B cell (primary cell): ENCODE measurements at regions of chr11 and their contacts with region 1.

Region 1: GRCh38 chr11:48109046-48109666 is 107.5 kb upstream of the OR4B1 start:
- DNase-seq: no peak
- ATAC-seq: peak; percentile 12
- H3K4me3 ChIP-seq: peak overlapping the region; percentile 5 to 68 (median 39)
- H3K4me3 Mint-ChIP-seq: peak overlapping the region; percentile 74
- H3K27ac ChIP-seq: peak overlapping the region; percentile 54 to 80
- H3K27ac Mint-ChIP-seq: peak overlapping the region; percentile 70
- H3K4me1 ChIP-seq: peaks cover 69 to 78% of the 10 kb centered on the region in 2 donors
- H3K4me1 Mint-ChIP-seq: peaks cover 70% of the 10 kb centered on the region
- H3K27me3 ChIP-seq: no peaks in the 10 kb centered on the region
- H3K27me3 Mint-ChIP-seq: no peaks in the 10 kb centered on the region
- CTCF ChIP-seq: no peak

Region 2: GRCh38 chr11:47847892-47848635 is 261.1 kb before region 1 on chr11 and contains the start of gene NUP160:
- CTCF ChIA-PET with region 1: interaction called, 89 read pairs
- POLR2A ChIA-PET with region 1: interaction called, 3 read pairs
- intact Hi-C with region 1: loop called (anchors 1 kb)
- DNase-seq: peak; percentile 92
- ATAC-seq: peak; percentile 77
- H3K4me3 ChIP-seq: peak within 1 kb of the TSS; percentile 93 to 99 (median 98)
- H3K4me3 Mint-ChIP-seq: peak within 1 kb of the TSS; percentile 99
- H3K27ac ChIP-seq: peak within 1 kb of the TSS; percentile 94 to 95
- H3K27ac Mint-ChIP-seq: peak within 1 kb of the TSS; percentile 98
- H3K4me1 ChIP-seq: peaks cover 62 to 66% of the 10 kb centered on the region in 2 donors
- H3K4me1 Mint-ChIP-seq: peaks cover 57% of the 10 kb centered on the region
- H3K27me3 ChIP-seq: no peaks in the 10 kb centered on the region
- H3K27me3 Mint-ChIP-seq: no peaks in the 10 kb centered on the region
- CTCF ChIP-seq: no peak
- total RNA-seq, gene NUP160: 74.3 and 77.3 TPM in 2 replicates

Region 3: GRCh38 chr11:47899801-47900200 is 209.4 kb before region 1 on chr11:
- CTCF ChIA-PET with region 1: no interaction called
- POLR2A ChIA-PET with region 1: interaction called, 5 read pairs
- intact Hi-C with region 1: loop called (anchors 1 kb)
- DNase-seq: peak; percentile 91
- ATAC-seq: peak; percentile 93
- H3K4me3 ChIP-seq: no peak overlapping the region
- H3K4me3 Mint-ChIP-seq: peak overlapping the region; percentile 61
- H3K27ac ChIP-seq: peak overlapping the region; percentile 76 to 88
- H3K27ac Mint-ChIP-seq: peak overlapping the region; percentile 96
- H3K4me1 ChIP-seq: peaks cover 33 to 38% of the 10 kb centered on the region in 2 donors
- H3K4me1 Mint-ChIP-seq: peaks cover 38% of the 10 kb centered on the region
- H3K27me3 ChIP-seq: no peaks in the 10 kb centered on the region
- H3K27me3 Mint-ChIP-seq: no peaks in the 10 kb centered on the region
- CTCF ChIP-seq: no peak

Region 4: GRCh38 chr11:47932544-47932943 is 176.6 kb before region 1 on chr11:
- CTCF ChIA-PET with region 1: interaction called, 193 read pairs
- POLR2A ChIA-PET with region 1: interaction called, 7 read pairs
- intact Hi-C with region 1: loop called (anchors 1 kb)
- DNase-seq: no peak
- ATAC-seq: no peak
- H3K4me3 ChIP-seq: no peak overlapping the region
- H3K4me3 Mint-ChIP-seq: no peak overlapping the region
- H3K27ac ChIP-seq: peak overlapping the region in 1 of 2 donors; percentile 4
- H3K27ac Mint-ChIP-seq: no peak overlapping the region
- H3K4me1 ChIP-seq: peaks cover 27 to 37% of the 10 kb centered on the region in 2 donors
- H3K4me1 Mint-ChIP-seq: peaks cover 40% of the 10 kb centered on the region
- H3K27me3 ChIP-seq: no peaks in the 10 kb centered on the region
- H3K27me3 Mint-ChIP-seq: no peaks in the 10 kb centered on the region
- CTCF ChIP-seq: no peak

Region 5: DNA sequence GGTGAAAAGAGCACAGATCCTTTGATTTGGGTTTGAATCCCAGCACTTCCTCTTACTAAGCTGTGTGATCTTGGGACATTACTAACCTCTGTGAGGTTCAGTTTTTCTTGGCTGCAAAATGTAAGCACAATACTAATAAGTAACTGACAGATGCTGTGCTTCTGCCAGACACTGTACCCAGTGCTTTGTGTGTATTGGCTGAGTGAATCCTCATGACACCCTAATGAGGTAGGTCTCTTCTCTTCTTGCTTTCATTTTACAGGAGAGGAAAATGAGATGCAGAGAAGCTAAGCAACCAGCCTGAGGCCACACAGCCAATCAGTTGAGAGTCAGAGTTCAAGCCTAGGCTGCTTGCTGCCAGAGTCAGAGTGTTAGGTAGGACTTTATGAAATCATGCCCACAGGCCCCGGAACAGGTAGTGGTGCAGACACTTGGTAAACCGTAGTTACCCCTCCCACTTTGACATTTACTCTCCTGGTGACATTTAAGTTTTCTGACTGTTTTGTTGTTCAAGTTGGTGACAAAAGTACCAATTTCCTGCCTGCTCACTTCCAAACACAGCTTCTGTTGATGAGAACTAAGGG is 107.6 kb before region 1 on chr11:
- CTCF ChIA-PET with region 1: interaction called, 14 read pairs
- POLR2A ChIA-PET with region 1: interaction called, 4 read pairs
- intact Hi-C with region 1: loop called (anchors 1 kb)
- DNase-seq: peak; percentile 55
- ATAC-seq: peak; percentile 84
- H3K4me3 ChIP-seq: peak overlapping the region in 1 of 5 experiments; percentile 19
- H3K4me3 Mint-ChIP-seq: peak overlapping the region; percentile 48
- H3K27ac ChIP-seq: peak overlapping the region; percentile 19 to 60
- H3K27ac Mint-ChIP-seq: peak overlapping the region; percentile 89
- H3K4me1 ChIP-seq: peaks cover 63 to 90% of the 10 kb centered on the region in 2 donors
- H3K4me1 Mint-ChIP-seq: peaks cover 75% of the 10 kb centered on the region
- H3K27me3 ChIP-seq: no peaks in the 10 kb centered on the region
- H3K27me3 Mint-ChIP-seq: no peaks in the 10 kb centered on the region
- CTCF ChIP-seq: no peak

Region 6: DNA sequence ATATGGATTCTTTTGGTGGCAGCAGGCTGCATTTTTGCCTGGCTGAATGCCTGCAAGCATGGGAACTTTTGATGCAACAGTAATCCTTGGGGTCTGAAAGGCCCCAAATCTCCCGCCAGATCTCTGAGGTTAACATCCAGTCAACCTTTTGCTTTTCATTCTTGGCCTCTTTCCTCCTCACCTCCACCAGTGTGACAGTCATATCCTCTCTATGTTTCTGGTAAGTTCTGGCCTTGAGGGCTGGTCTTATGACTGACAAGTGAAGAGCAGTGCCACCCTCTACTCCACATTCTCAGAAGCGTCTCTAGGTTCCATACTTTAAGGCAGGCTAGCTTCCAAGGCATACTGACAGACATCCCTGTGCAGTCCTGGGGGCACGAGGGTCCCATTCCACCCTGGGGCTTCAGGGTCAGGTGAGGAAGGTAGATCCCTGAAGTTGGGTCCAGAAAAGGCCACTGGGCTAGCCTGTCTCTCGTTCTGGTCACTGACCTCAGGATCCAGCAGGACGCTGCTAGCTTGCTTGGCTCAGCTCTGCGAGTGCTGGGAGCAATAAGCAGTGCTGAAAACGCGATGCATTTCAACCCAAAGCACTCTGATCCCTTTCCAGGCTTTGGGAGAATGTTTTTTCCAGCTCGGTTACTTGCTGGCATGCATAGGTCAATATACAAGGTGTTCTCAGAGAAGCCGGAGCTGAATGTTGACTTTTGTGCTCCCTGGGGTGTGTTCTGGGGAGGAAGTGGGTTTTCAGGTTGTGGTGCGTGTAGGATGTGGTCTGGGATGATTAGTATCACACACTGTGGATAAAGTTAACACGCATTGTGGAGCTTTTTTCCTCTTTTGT is 53.6 kb before region 1 on chr11:
- CTCF ChIA-PET with region 1: interaction called, 9 read pairs
- POLR2A ChIA-PET with region 1: interaction called, 3 read pairs
- intact Hi-C with region 1: loop called (anchors 10 kb)
- DNase-seq: peak; percentile 49
- ATAC-seq: peak; percentile 62
- H3K4me3 ChIP-seq: peak overlapping the region in 4 of 5 experiments; percentile 24 to 31 (median 27)
- H3K4me3 Mint-ChIP-seq: peak overlapping the region; percentile 77
- H3K27ac ChIP-seq: no peak overlapping the region
- H3K27ac Mint-ChIP-seq: peak overlapping the region; percentile 27
- H3K4me1 ChIP-seq: peaks cover 70 to 76% of the 10 kb centered on the region in 2 donors
- H3K4me1 Mint-ChIP-seq: peaks cover 75% of the 10 kb centered on the region
- H3K27me3 ChIP-seq: no peaks in the 10 kb centered on the region
- H3K27me3 Mint-ChIP-seq: no peaks in the 10 kb centered on the region
- CTCF ChIP-seq: no peak